OCI-LY7 (cell line): ENCODE measurements at regions of chr4 and their contacts with region 1.

Region 1: DNA sequence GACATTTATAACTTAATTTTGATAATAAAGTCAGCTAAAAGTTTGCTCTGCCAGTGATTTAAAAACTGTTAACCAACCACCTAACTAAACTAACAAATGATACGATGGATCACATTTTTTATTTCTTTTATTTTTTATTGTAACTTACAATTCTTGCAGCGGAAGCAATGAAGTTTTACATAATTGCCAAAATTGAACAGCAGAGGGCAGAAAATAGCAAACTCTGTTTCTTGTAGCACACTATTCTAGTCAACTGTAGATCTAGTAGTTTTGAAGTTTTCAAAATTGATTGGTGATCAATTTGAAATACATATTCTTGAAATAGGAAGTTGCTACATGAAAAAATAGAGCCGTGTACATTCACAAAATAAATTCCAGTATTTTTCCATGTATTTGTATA is 2.8 kb upstream of the GRIA2 start:
- DNase-seq: peak; percentile 1
- H3K4me3 ChIP-seq: no peak overlapping the region
- H3K27ac ChIP-seq: no peak overlapping the region
- H3K4me1 ChIP-seq: no peaks in the 10 kb centered on the region
- CTCF ChIP-seq: peak; percentile 72

Region 2: DNA sequence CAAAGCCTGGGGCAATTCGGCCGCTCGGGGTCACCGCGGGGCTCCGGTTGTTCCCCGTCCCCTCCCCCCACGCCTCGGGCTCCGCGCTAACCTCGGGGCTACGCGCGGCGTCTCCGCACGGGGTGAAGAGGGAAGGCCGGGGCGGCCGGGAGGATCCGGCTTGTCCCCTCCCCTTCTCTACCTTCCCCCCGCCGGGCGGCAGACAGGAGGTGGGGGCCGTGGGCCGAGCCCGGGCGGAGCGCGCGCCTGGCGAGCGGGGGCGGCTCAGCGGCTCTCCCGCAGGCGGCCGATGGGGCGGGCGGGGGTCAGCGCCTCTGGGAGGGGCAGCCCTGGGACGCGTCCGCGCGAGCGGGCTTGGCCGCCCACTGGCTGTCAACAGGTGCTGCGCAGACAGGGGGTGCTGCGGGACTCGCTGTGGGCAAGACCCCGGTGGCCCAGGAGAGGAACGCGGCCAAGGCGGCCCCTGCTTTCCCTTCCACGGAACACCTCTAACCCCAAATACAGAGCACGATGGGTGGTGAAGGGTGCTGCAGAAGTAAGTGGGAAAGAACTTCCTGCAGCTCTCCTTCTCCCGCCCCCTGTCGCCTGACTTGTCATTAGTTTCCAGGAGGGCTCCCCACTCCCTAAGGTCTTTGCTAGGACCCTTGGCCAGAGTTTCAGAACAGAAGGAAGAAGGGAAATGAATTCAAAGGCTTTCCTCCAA is 245.9 kb before region 1 on chr4 and contains the start of gene PDGFC:
- CTCF ChIA-PET with region 1: no interaction called
- POLR2A ChIA-PET with region 1: no interaction called
- intact Hi-C with region 1: no loop called
- DNase-seq: no peak
- H3K4me3 ChIP-seq: no peak within 1 kb of the TSS
- H3K27ac ChIP-seq: no peak within 1 kb of the TSS
- H3K4me1 ChIP-seq: no peaks in the 10 kb centered on the region
- CTCF ChIP-seq: no peak
- total RNA-seq, gene PDGFC: not detected in 2 replicates

Region 3: DNA sequence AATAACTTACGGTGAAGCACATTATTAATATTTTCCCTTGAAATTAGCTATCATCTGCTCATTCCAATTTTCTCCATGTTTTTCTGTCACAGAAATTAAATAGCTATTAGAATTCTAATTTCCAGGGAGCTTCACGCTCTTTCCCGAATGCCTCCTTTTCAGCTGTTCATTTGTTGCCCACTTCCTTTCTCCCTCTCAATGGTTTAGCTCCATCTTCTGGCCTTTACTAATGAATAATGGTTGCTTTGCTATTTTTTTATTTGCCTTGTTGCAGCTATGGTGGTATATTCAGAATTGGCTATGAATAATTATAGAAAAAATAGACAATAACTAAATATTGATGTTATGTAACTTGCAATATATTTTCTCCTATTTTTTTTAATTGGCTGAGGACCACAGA is 73.4 kb after region 1 on chr4:
- CTCF ChIA-PET with region 1: no interaction called
- POLR2A ChIA-PET with region 1: no interaction called
- intact Hi-C with region 1: no loop called
- DNase-seq: no peak
- H3K4me3 ChIP-seq: no peak overlapping the region
- H3K27ac ChIP-seq: no peak overlapping the region
- H3K4me1 ChIP-seq: no peaks in the 10 kb centered on the region
- CTCF ChIP-seq: no peak

Region 4: DNA sequence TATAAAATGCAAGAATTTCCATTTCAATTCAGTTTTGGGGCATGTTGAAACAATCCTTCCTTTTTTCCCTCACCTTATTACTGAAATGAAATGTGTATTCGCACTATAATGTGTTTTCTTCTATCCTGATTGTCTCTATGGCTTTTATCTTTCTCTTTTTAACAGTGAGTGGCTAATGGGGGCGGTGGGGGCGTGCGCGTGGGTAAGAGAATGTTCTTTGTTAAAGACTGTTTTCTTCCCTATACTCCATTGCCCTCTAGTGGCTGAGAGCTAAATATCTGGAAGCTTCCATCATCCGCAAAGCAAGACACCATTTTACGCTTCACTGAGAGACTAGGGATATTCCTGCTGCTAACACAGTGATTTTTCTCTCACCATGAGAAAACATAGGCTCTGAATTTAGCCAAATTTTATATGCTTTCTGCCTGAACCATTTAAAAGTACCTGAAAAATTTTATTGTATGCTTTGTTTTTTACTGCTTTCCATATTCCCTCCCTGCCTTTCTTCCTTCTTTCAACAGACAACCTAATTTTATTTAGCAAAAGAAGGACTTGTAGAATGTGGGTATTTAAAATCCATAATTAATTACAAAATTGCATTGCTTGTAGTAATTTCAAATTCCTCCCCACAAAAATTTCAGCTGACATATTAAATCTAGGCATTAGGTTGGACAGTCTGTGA is 761.1 kb after region 1 on chr4:
- CTCF ChIA-PET with region 1: no interaction called
- POLR2A ChIA-PET with region 1: no interaction called
- intact Hi-C with region 1: loop called (anchors 5 kb)
- DNase-seq: peak; percentile 49
- H3K4me3 ChIP-seq: no peak overlapping the region
- H3K27ac ChIP-seq: no peak overlapping the region
- H3K4me1 ChIP-seq: no peaks in the 10 kb centered on the region
- CTCF ChIP-seq: peak; percentile 87